Posterior cingulate gyrus (tissue), 11 donors: ENCODE measurements at regions of chr9 and their contacts with region 1.

Region 1: GRCh38 chr9:2158111-2158610 is 143.0 kb downstream of the SMARCA2 start:
- DNase-seq: peak in 4 of 10 donors; percentile 14 to 60 (median 22)

Region 2: DNA sequence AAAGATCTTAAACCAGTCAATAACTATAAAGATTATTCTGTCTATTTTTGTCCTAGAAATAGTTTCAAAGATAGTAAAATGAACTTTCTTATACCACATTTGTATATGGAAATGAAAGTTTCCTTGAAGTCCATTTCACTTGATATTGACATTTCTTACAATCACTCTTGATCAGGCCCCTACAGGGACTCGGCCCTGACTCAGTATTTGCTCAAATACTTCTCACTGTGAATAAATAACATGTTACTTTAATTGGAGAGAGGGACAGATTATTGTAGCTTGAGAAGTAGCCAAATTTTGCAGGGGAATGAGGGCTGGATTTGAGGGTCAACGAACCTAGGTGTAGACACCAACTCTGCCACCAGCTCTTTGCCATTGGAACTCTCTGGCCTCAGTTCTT is 168.7 kb before region 1 on chr9:
- intact Hi-C with region 1: no loop called
- DNase-seq: no peak

Region 3: DNA sequence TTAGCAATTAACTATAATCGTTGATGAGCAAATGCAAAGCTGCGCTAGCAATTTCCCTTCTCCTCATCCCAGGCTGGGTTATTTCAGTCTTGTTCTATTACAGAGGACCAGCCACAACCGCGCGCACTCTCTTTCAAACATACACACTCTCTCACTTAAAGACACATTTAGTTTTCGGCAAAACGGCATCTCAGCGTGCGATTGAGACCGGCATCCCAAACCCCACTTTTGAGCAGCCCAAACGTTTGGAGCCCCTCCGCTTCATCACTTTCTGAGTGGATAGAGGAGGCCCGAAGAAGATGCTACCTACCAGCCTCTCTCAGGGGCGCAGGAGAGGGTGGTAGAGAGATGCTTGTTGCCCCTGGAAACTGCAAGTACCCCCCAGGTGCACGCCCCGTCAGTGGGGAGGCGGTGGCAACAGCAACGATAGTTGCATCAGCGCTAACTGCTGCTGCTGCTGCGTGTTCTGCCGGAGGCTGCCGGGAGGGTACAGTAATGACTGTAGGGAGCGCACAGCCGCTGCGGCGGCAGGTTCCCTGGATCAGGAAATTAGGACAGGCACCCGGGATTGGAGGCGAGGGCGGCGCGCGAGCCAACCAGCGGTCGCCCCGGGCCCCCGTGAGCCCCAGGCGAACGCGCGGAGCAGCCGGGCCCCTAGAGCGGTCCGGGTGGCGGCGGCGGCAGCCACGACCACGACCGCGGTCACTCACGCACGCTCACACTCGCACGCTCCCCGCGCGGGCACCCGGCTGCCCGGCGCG is 462.9 kb after region 1 on chr9:
- intact Hi-C with region 1: loop called (anchors 10 kb)
- DNase-seq: peak; percentile 52 to 97 (median 78)

Region 4: DNA sequence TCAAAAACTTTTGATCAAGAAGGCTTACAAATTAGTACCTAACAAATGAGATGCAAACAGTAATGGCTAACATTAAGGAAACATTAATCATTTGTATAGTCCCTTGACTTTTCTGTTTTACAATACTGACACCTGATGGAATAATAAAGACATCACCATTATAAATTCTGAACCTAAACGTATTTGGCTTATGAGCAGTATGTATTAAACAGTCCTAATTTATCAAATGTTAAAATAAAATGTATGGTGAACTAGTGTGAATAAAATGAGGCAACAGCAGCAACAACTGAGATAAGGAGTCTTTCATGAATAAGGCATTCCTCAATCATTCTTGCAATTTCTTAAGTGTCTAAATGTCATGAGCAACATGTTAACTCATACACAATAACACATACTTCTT is 679.8 kb after region 1 on chr9:
- intact Hi-C with region 1: loop called (anchors 10 kb)
- DNase-seq: no peak